ENCODE measurements at regions of chr14 and their contacts with region 1.

Region 1: GRCh38 chr14:60331201-60332045 is 82.4 kb downstream of the PPM1A start:
- DNase-seq: peak; percentile 81
- H3K4me3 Mint-ChIP-seq: peak overlapping the region; percentile 76
- H3K27ac Mint-ChIP-seq: peak overlapping the region; percentile 80
- H3K4me1 Mint-ChIP-seq: peaks cover 31% of the 10 kb centered on the region
- H3K27me3 Mint-ChIP-seq: peaks cover 33% of the 10 kb centered on the region

Region 2: GRCh38 chr14:60257865-60258264 is 73.6 kb before region 1 on chr14:
- CTCF ChIA-PET with region 1: interaction called, 11 read pairs
- POLR2A ChIA-PET with region 1: no interaction called
- DNase-seq: no peak
- H3K4me3 Mint-ChIP-seq: no peak overlapping the region
- H3K27ac Mint-ChIP-seq: no peak overlapping the region
- H3K4me1 Mint-ChIP-seq: peaks cover 9% of the 10 kb centered on the region
- H3K27me3 Mint-ChIP-seq: no peaks in the 10 kb centered on the region

Region 3: DNA sequence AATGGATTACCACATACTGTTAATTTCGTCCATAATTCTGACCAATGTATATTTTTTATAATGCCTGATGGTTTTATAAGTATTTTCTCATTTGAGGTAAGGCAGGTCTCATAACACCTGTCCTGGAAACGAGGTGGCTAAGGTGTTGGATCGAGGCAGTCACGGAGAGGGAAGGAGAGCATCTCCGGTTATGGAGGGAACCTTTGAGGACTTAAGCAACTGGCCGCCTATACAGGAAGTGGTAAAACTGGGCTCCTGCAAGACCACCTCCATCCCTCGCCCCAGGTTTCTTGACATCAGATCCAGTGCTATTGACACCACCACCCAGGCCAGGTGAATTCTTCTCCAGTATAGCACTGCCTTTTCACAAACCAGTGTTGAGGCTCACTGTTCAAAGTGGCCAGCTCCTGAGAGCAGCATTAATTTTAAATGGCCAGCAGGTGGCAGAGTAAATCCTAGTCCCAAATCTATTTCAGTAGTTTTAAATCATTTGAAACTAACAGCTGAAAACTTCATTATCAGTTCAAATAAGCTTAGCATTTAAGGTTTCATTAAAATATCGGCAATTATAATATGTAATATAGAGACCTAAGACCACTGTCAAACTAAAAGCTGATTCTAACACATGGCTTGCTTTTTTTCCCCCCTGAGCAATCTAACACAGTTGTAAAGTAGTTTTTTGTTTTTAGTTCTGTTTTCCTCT is 18.4 kb after region 1 on chr14:
- CTCF ChIA-PET with region 1: interaction called, 19 read pairs
- POLR2A ChIA-PET with region 1: interaction called, 3 read pairs
- DNase-seq: no peak
- H3K4me3 Mint-ChIP-seq: no peak overlapping the region
- H3K27ac Mint-ChIP-seq: no peak overlapping the region
- H3K4me1 Mint-ChIP-seq: no peaks in the 10 kb centered on the region
- H3K27me3 Mint-ChIP-seq: peaks cover 15% of the 10 kb centered on the region